ENCODE measurements at regions of chr6 and their contacts with region 1.

Region 1: GRCh38 chr6:9398071-9398766 is 962.9 kb upstream of the SLC35B3 start:
- DNase-seq: peak in 1 of 2 donors; percentile 26
- H3K4me3 ChIP-seq: no peak overlapping the region
- CTCF ChIP-seq: no peak
- POLR2A ChIP-seq: no peak

Region 2: GRCh38 chr6:9168669-9169068 is 229.6 kb before region 1 on chr6:
- intact Hi-C with region 1: loop called (anchors 10 kb)
- DNase-seq: no peak
- H3K4me3 ChIP-seq: no peak overlapping the region
- CTCF ChIP-seq: no peak
- POLR2A ChIP-seq: no peak

Measured in lower leg skin (tissue), 4 donors.